Lower leg skin (tissue), 4 donors: ENCODE measurements at regions of chr20 and their contacts with region 1.

Region 1: DNA sequence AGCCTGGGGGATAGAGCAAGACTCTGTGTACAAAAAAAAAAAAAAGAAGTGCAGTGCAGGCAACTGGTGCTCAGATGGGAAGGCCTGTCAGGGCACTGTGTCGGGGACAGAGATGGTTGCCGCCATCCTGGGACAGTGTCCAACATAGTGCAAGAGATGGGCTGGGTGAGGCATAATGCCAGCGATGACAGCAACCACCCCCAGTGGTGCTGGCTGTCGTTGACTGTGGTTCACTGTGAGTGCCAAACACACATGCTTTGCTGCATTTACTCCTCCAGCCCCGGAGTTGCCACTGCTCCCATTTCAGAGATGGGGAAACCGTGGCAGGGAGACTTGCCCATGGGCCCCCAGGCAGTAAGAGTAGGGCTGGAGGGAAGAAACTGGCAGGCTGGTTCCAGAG is 5.2 kb upstream of the C20orf203 start:
- DNase-seq: peak in 1 of 2 donors; percentile 32
- H3K4me3 ChIP-seq: no peak overlapping the region
- CTCF ChIP-seq: no peak
- POLR2A ChIP-seq: no peak

Region 2: DNA sequence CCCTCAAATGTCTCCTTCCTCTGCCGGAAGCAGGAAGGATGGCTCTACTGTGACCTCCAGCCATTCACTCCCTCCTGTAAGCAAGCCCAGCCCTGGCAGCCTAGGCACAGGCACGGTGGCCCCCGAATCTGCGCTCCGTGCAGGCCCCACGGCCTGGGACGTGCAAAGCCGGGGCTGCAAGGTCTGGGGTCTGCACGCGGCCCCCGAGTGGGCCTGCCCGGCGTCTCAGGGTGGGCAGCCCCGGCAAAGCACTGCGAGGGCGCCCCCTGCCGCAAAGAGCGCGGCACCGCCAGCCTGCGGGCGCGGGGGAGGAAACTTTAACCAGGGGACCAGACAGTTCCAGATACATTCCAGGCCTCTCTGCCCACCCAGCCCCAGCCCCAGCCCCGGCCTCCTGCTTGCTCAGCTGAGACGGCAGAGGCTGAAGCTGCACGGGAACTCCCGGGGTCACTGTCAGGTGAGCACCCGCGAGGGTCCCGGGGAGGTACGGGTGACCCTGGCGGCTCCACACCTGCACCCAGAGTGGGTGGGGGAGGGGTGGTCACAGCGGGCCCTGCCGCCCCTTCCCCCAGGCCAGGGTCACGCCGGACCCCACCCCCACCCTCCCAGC is 222.0 kb before region 1 on chr20:
- intact Hi-C with region 1: no loop called
- DNase-seq: no peak
- H3K4me3 ChIP-seq: no peak overlapping the region
- CTCF ChIP-seq: peak in 1 of 3 donors; percentile 20
- POLR2A ChIP-seq: no peak

Region 3: GRCh38 chr20:32779500-32780211 is 100.7 kb after region 1 on chr20:
- intact Hi-C with region 1: loop called (anchors 5 kb)
- DNase-seq: no peak
- H3K4me3 ChIP-seq: no peak overlapping the region
- CTCF ChIP-seq: no peak
- POLR2A ChIP-seq: no peak

Region 4: DNA sequence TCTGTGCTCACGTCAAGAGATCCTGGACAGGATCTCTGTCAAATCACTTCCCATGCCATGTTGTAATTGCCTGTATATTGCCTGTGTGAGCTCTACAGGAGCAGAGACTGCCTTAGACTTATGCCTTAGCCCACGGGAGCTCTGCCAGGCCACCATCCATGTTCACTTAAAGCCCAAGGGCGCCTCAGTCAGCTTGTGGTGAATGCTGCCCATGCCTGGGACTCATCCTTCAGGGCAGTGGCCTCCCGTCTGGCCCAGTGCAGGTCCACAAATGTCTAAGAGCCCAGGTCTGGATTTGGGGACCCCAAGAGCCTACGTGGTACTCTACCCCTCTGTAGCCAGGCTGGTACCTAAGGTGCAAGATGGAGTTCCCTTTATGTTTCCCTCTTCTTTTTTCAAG is 466.6 kb after region 1 on chr20:
- intact Hi-C with region 1: no loop called
- DNase-seq: no peak
- H3K4me3 ChIP-seq: no peak overlapping the region
- CTCF ChIP-seq: no peak
- POLR2A ChIP-seq: no peak